Natural killer cell (primary cell): ENCODE measurements at regions of chr19 and their contacts with region 1.

Region 1: DNA sequence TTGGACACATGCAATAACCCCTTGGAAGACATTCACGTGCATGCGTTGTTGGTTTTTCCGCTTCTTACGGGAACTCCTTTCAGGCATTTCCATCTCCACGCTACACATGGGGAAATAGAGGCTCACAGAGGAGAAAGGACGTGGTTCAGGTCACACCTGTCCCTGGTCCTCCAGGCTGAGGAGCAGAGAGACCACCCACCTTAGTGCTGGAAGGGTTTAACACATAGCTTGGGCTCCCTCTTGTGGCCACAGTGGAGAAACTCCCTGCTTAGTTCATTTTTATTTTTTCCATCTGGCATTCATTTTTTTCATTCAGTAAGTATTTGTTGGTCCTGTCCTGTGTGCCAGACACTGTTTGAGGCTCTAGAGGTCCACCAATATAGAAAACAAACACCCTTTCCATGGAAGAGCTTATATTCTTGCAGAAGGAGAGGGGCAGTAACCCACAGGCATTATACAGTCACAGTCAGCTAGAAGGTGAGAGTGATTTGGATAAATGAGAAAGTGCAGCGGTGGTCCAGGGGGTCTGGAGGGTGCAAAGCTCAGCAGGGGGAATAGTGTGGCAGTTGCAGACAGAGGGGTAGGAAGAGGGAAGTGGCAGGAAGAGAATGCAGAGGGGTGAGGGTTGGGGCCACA is 24.2 kb upstream of the TTYH1 start:
- DNase-seq: peak; percentile 55 to 91
- ATAC-seq: peak; percentile 58 to 65 (median 60)
- H3K4me3 ChIP-seq: no peak overlapping the region
- H3K4me3 Mint-ChIP-seq: peak overlapping the region; percentile 58
- H3K27ac ChIP-seq: no peak overlapping the region
- H3K27ac Mint-ChIP-seq: peak overlapping the region in 1 of 2 donors; percentile 45
- H3K4me1 ChIP-seq: peaks cover 30% of the 10 kb centered on the region
- H3K4me1 Mint-ChIP-seq: peaks cover 25 to 34% of the 10 kb centered on the region in 2 donors
- H3K27me3 ChIP-seq: no peaks in the 10 kb centered on the region
- H3K27me3 Mint-ChIP-seq: peaks cover 4 to 9% of the 10 kb centered on the region in 2 donors
- CTCF ChIP-seq: peak; percentile 92

Region 2: DNA sequence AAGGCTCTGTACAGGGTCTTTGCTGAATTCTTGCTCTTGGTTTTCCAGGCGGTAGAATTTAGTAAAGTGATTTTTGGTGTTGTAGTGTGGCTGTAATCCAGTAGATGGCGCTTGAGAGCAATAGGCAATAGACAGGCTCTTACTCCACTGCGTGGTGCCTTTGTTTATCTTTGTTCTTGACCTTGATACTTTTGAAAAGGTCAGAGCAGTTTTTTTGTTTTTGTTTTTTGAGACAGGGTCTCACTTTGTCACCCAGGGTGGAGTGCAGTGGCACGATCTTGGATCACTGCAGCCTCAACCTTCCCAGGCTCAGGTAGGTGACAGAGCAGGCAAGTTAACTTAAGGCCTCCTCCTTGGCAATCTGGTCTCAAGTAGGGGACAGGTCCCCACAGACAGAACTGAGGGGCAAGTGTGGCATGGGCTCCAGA is 65.9 kb before region 1 on chr19:
- intact Hi-C with region 1: loop called (anchors 1 kb)
- DNase-seq: peak; percentile 36 to 83
- ATAC-seq: peak; percentile 80 to 94 (median 90)
- H3K4me3 ChIP-seq: no peak overlapping the region
- H3K4me3 Mint-ChIP-seq: no peak overlapping the region
- H3K27ac ChIP-seq: no peak overlapping the region
- H3K27ac Mint-ChIP-seq: no peak overlapping the region
- H3K4me1 ChIP-seq: peaks cover 8% of the 10 kb centered on the region
- H3K4me1 Mint-ChIP-seq: peaks cover 0 to 4% of the 10 kb centered on the region in 2 donors
- H3K27me3 ChIP-seq: no peaks in the 10 kb centered on the region
- H3K27me3 Mint-ChIP-seq: peaks cover 20 to 32% of the 10 kb centered on the region in 2 donors
- CTCF ChIP-seq: peak; percentile 94

Region 3: DNA sequence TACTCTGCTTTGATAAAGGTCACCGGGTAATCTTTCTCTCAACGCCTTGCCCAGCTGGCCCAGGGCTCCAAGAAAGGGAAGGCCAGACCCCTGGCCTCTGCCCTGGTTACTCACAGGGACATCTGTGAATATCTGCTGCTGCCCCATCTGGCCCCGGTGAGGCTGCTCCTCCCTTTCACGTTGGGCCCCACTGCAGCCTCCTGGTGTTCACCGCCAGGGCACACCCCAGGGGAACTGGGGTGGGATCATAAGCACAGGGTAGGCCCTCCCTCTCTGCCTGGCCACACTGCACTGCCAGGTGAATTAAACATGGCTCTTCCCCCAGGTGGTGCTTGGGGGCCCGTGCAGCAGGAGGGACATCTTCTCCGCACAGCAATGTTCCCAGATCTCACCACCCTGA is 39.0 kb before region 1 on chr19:
- intact Hi-C with region 1: loop called (anchors 5 kb)
- DNase-seq: no peak
- ATAC-seq: no peak
- H3K4me3 ChIP-seq: no peak overlapping the region
- H3K4me3 Mint-ChIP-seq: no peak overlapping the region
- H3K27ac ChIP-seq: peak overlapping the region; percentile 10
- H3K27ac Mint-ChIP-seq: peak overlapping the region; percentile 9 to 70
- H3K4me1 ChIP-seq: peaks cover 8% of the 10 kb centered on the region
- H3K4me1 Mint-ChIP-seq: peaks cover 0 to 35% of the 10 kb centered on the region in 2 donors
- H3K27me3 ChIP-seq: no peaks in the 10 kb centered on the region
- H3K27me3 Mint-ChIP-seq: peaks cover 0 to 11% of the 10 kb centered on the region in 2 donors
- CTCF ChIP-seq: no peak

Region 4: GRCh38 chr19:54707962-54708361 is 316.9 kb after region 1 on chr19:
- intact Hi-C with region 1: no loop called
- DNase-seq: peak; percentile 25 to 53
- ATAC-seq: peak; percentile 82 to 93 (median 85)
- H3K4me3 ChIP-seq: no peak overlapping the region
- H3K4me3 Mint-ChIP-seq: peak overlapping the region; percentile 50
- H3K27ac ChIP-seq: no peak overlapping the region
- H3K27ac Mint-ChIP-seq: peak overlapping the region in 1 of 2 donors; percentile 67
- H3K4me1 ChIP-seq: peaks cover 36% of the 10 kb centered on the region
- H3K4me1 Mint-ChIP-seq: peaks cover 36 to 62% of the 10 kb centered on the region in 2 donors
- H3K27me3 ChIP-seq: peaks cover 10% of the 10 kb centered on the region
- H3K27me3 Mint-ChIP-seq: peaks cover 31 to 43% of the 10 kb centered on the region in 2 donors
- CTCF ChIP-seq: no peak